K562 (cell line): ENCODE measurements at regions of chr7 and their contacts with region 1.

Region 1: GRCh38 chr7:1225441-1226185 is 7.1 kb upstream of the UNCX start:
- DNase-seq: peak; percentile 50 to 81 (median 78)
- ATAC-seq: peak; percentile 89
- H3K4me3 ChIP-seq: no peak overlapping the region
- H3K27ac ChIP-seq: no peak overlapping the region
- H3K4me1 ChIP-seq: peaks cover 0 to 33% of the 10 kb centered on the region in 2 experiments; a peak in 2 of 5 replicates
- H3K27me3 ChIP-seq: peaks cover 38 to 66% of the 10 kb centered on the region in 2 experiments
- CTCF ChIP-seq: peak; percentile 77 to 89 (median 88)
- EP300 ChIP-seq: no peak
- POLR2A ChIP-seq: no peak
- RAD21 ChIP-seq: peak; percentile 78 to 89

Region 2: GRCh38 chr7:1368682-1369571 is 143.3 kb after region 1 on chr7:
- CTCF ChIA-PET with region 1: no interaction called
- POLR2A ChIA-PET with region 1: no interaction called
- in situ Hi-C with region 1: no loop called
- intact Hi-C with region 1: loop called (anchors 10 kb)
- DNase-seq: peak; percentile 84 to 100 (median 100)
- ATAC-seq: peak; percentile 96
- H3K4me3 ChIP-seq: peak overlapping the region; percentile 25; the same call in 1 of the 2 replicates
- H3K27ac ChIP-seq: no peak overlapping the region
- H3K4me1 ChIP-seq: peaks cover 0 to 28% of the 10 kb centered on the region in 2 experiments; a peak in 3 of 5 replicates
- H3K27me3 ChIP-seq: peaks cover 30 to 81% of the 10 kb centered on the region in 2 experiments; a peak in 4 of 5 replicates
- CTCF ChIP-seq: peak; percentile 46 to 75 (median 49); a peak in 5 of 6 replicates
- EP300 ChIP-seq: no peak
- POLR2A ChIP-seq: no peak
- RAD21 ChIP-seq: peak in 1 of 2 experiments; percentile 42; a peak in 1 of 4 replicates

Region 3: GRCh38 chr7:1412322-1413261 is 187.0 kb after region 1 on chr7:
- CTCF ChIA-PET with region 1: interaction called, 27 read pairs
- POLR2A ChIA-PET with region 1: no interaction called
- in situ Hi-C with region 1: no loop called
- intact Hi-C with region 1: loop called (anchors 1 kb)
- DNase-seq: peak; percentile 91 to 99 (median 98)
- ATAC-seq: peak; percentile 97
- H3K4me3 ChIP-seq: no peak overlapping the region
- H3K27ac ChIP-seq: no peak overlapping the region
- H3K4me1 ChIP-seq: peaks cover 6 to 28% of the 10 kb centered on the region in 2 experiments
- H3K27me3 ChIP-seq: peaks cover 7 to 36% of the 10 kb centered on the region in 2 experiments; a peak in 3 of 5 replicates
- CTCF ChIP-seq: peak; percentile 84 to 91 (median 90)
- EP300 ChIP-seq: no peak
- POLR2A ChIP-seq: no peak
- RAD21 ChIP-seq: peak; percentile 83 to 89

Region 4: DNA sequence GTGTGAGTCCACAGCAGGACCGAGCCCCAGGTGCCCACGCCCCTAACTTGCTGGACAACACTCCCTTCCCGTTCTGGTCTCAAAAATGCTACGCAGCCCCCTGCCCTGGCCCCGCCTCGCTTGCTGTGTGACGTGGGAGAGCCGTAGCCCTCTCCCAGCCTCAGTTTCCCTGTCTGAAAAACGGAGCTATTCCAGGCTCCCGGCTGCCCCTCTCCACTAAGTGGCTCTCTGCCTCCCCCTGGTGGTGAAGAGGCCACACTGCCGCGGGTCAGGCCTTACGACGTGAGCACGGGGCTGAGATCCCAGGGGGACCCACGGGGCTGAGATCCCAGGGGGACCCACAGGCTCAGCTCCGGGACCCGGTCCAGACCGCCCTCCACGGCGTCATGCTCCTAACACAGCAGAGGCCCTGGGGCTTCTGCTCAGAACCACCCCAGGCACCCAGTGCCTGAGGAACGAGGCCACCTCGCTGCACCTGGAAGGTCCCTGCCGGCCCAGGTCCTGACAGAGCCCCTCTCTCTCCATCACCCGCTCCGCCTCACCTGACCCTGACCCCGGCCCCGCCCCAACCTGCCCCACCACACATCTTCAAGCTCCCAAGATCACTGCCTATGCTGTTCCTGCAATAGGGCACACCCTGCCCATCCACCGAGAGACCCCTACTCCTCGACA is 206.9 kb after region 1 on chr7:
- CTCF ChIA-PET with region 1: interaction called, 13 read pairs
- POLR2A ChIA-PET with region 1: interaction called, 4 read pairs
- in situ Hi-C with region 1: no loop called
- intact Hi-C with region 1: no loop called
- DNase-seq: peak; percentile 74 to 82 (median 75)
- ATAC-seq: peak; percentile 90
- H3K4me3 ChIP-seq: no peak overlapping the region
- H3K27ac ChIP-seq: no peak overlapping the region
- H3K4me1 ChIP-seq: peaks cover 6 to 63% of the 10 kb centered on the region in 2 experiments; a peak in 3 of 5 replicates
- H3K27me3 ChIP-seq: no peaks in the 10 kb centered on the region
- CTCF ChIP-seq: peak; percentile 85 to 92 (median 87)
- EP300 ChIP-seq: no peak
- POLR2A ChIP-seq: peak; percentile 36; the same call in 1 of the 2 replicates
- RAD21 ChIP-seq: peak; percentile 38 to 66

Region 5: DNA sequence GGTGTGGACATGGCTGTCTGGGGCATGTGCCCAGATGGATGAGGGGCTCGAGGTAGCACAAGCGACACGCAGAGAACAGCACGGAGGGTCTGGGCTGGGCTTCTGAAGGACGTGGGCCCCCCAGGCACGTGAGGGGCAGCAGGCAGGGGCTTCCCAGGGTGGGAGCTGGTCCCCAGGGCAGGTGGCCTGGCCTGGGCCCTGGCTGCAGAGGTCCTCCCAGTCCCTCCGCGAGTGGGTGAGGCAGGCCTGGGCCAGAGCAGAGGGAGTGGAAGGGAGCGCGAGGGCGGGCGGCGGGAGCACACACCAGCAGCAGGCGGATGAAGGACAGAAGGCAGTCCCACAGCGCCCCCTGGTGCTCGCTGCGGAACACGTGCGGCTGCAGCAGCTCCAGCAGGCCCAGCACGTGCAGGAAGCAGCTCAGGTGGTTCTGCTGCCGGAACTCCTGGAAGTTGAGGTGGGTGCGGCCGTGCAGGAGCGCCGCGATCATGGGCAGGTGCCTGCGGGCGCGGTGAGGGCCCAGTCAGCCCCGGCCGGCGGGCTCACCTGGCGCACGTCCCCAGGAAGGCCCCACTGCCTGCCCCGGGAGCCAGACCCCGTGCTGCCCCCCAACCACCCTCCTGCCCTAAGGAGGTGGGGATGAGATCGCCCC is 248.4 kb after region 1 on chr7:
- CTCF ChIA-PET with region 1: interaction called, 19 read pairs
- POLR2A ChIA-PET with region 1: no interaction called
- in situ Hi-C with region 1: loop called (anchors 5 kb)
- intact Hi-C with region 1: loop called (anchors 2 kb)
- DNase-seq: peak; percentile 86 to 93 (median 86)
- ATAC-seq: peak; percentile 98
- H3K4me3 ChIP-seq: no peak overlapping the region
- H3K27ac ChIP-seq: no peak overlapping the region
- H3K4me1 ChIP-seq: peaks cover 2 to 66% of the 10 kb centered on the region in 2 experiments; a peak in 3 of 5 replicates
- H3K27me3 ChIP-seq: no peaks in the 10 kb centered on the region
- CTCF ChIP-seq: peak; percentile 87 to 93 (median 92)
- EP300 ChIP-seq: no peak
- POLR2A ChIP-seq: peak; percentile 27; the same call in 1 of the 2 replicates
- RAD21 ChIP-seq: peak; percentile 89 to 95